IMR-90 (cell line): ENCODE measurements at regions of chr17 and their contacts with region 1.

Region 1: DNA sequence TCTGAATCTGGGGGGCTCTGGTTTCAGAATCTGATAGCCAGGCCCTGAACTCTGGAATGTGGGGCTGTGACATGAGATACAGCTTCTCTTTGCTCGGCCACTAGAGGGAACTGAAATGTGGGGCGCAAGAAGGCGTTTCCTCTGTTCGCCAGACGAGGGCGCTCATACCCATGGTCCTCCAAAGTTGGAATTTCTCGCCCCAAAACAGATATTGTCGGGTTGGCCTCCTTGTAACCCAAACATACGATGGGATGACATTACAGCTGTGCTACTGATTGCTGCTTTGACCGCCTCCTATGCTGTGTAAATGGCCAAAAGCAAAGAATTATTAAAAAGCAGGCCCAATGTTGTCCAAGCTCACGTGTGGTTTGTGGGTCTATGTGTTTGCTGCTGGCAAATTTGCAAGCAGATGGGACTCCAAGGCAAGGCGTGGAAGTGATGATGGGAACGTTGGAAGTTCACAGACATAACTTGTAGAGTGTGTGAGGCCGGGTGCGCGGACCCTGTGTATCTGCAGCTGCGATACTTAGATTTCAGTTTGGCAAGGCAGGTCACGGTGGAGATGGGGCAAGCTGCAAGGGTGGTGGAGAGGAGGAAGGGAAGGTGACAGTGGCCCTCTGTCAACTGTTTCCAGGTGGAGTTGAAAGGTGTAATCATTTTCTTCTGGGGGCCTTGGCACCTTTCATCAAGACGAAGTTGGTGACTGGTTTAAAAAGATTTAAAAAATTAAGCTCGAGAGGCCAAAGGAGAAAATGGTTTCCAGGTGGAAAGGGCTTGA is 13.0 kb upstream of the MSI2 start:
- DNase-seq: peak; percentile 60
- ATAC-seq: peak; percentile 96
- H3K4me3 ChIP-seq: no peak overlapping the region
- H3K27ac ChIP-seq: no peak overlapping the region
- H3K4me1 ChIP-seq: no peaks in the 10 kb centered on the region
- H3K27me3 ChIP-seq: peaks cover 12% of the 10 kb centered on the region
- CTCF ChIP-seq: peak; percentile 100
- POLR2A ChIP-seq: no peak
- RAD21 ChIP-seq: peak; percentile 96

Region 2: GRCh38 chr17:57255776-57256681 is 12.7 kb after region 1 on chr17 and contains the start of gene MSI2:
- CTCF ChIA-PET with region 1: interaction called, 15 read pairs
- POLR2A ChIA-PET with region 1: no interaction called
- dilution Hi-C with region 1: no loop called
- in situ Hi-C with region 1: no loop called
- intact Hi-C with region 1: no loop called
- DNase-seq: peak; percentile 78
- ATAC-seq: peak; percentile 84
- H3K4me3 ChIP-seq: peak within 1 kb of the TSS; percentile 99
- H3K27ac ChIP-seq: peak within 1 kb of the TSS; percentile 54
- H3K4me1 ChIP-seq: no peaks in the 10 kb centered on the region; the same call in 1 of the 2 replicates
- H3K27me3 ChIP-seq: peaks cover 5% of the 10 kb centered on the region
- CTCF ChIP-seq: no peak
- POLR2A ChIP-seq: no peak
- RAD21 ChIP-seq: no peak
- total RNA-seq, gene MSI2: 16.0 and 18.1 TPM in 2 replicates

Region 3: DNA sequence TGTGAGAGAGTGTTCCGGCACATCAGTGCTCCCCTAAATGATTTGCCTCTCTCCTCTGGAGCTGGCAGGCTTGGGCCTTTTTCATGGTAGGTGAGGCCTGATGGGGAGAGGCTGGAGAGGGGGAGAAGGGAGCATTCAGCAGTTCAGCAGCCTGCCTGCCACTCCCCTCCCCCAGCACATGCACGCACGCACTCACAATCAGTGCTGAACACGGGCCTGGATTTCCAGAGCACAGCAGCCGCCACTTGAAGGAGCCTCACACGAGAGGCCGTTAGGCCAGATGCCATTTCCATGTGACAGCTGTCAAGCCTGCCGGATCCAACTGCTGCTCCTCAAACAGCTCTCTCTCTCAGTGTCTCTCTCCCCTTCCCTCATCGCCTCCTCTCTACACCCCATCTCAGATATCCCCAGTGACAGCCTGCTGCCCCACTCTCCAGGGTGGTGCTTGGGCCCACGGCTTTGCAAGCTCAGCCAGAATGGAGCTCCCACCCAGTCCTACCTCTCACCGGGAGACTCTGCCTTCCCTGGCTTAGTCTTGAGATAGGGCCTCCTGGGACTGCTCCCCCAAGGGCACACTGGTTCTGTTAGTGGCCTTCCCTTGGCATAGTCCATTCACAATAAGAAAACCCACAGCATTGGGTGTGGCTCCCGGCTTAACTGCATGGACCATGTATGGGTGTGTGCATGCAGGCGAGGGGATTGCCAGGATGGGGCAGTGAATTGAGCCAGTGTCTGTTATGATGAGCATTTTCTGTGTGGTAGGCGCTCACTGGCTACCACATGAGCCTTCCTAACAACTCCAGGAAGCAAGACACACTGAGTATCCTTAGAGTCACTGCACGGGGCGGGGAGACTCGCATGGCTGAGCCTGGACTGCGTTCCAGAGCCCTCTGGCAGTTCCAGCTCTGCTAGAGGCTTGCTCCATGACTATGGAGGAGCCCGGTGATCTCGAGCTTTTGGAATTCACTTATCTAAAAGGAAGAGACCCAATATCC is 275.5 kb after region 1 on chr17:
- CTCF ChIA-PET with region 1: interaction called, 4 read pairs
- POLR2A ChIA-PET with region 1: no interaction called
- dilution Hi-C with region 1: no loop called
- in situ Hi-C with region 1: loop called (anchors 5 kb)
- intact Hi-C with region 1: no loop called
- DNase-seq: peak; percentile 58
- ATAC-seq: peak; percentile 28; the same call in 1 of the 2 replicates
- H3K4me3 ChIP-seq: no peak overlapping the region
- H3K27ac ChIP-seq: no peak overlapping the region
- H3K4me1 ChIP-seq: peaks cover 21% of the 10 kb centered on the region
- H3K27me3 ChIP-seq: no peaks in the 10 kb centered on the region
- CTCF ChIP-seq: no peak
- POLR2A ChIP-seq: no peak
- RAD21 ChIP-seq: no peak

Region 4: DNA sequence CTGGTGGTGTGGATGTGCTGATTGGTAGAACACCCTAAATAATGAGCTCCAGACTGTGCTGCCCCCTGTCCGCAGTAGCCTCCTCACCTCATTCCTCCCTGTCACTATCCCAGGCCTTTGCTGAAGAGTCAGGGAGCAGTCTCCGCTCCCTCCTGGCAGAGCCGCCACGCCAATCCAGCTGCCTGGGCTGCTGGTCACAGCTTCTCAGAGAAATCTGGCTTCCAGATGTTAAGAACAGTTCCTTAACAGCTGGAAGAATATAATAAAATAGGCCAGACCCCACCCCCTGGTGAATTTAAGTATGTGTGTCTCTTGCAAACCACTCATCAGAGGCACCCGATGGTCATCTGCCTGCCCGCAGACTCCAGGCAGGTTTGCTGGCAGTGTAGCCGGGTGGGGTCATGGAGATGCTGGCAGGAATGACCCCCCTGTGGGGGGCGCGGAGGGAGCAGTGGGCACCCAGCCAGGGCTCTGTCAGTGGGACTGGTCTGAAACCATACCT is 340.7 kb after region 1 on chr17:
- CTCF ChIA-PET with region 1: interaction called, 3 read pairs
- POLR2A ChIA-PET with region 1: no interaction called
- dilution Hi-C with region 1: no loop called
- in situ Hi-C with region 1: loop called (anchors 10 kb)
- intact Hi-C with region 1: loop called (anchors 5 kb)
- DNase-seq: no peak
- ATAC-seq: no peak
- H3K4me3 ChIP-seq: no peak overlapping the region
- H3K27ac ChIP-seq: no peak overlapping the region
- H3K4me1 ChIP-seq: no peaks in the 10 kb centered on the region
- H3K27me3 ChIP-seq: no peaks in the 10 kb centered on the region; the same call in 1 of the 2 replicates
- CTCF ChIP-seq: no peak
- POLR2A ChIP-seq: no peak
- RAD21 ChIP-seq: no peak

Region 5: GRCh38 chr17:57671667-57672632 is 428.6 kb after region 1 on chr17:
- CTCF ChIA-PET with region 1: interaction called, 17 read pairs
- POLR2A ChIA-PET with region 1: no interaction called
- dilution Hi-C with region 1: no loop called
- in situ Hi-C with region 1: no loop called
- intact Hi-C with region 1: loop called (anchors 1 kb)
- DNase-seq: peak; percentile 69
- ATAC-seq: peak; percentile 99
- H3K4me3 ChIP-seq: no peak overlapping the region
- H3K27ac ChIP-seq: no peak overlapping the region
- H3K4me1 ChIP-seq: peaks cover 12% of the 10 kb centered on the region
- H3K27me3 ChIP-seq: no peaks in the 10 kb centered on the region
- CTCF ChIP-seq: peak; percentile 89
- POLR2A ChIP-seq: 0 out of 2 replicates have a peak, but pooled peaks have one; percentile 25
- RAD21 ChIP-seq: peak; percentile 93

Region 6: GRCh38 chr17:57833179-57833939 is 590.0 kb after region 1 on chr17:
- CTCF ChIA-PET with region 1: interaction called, 6 read pairs
- POLR2A ChIA-PET with region 1: no interaction called
- dilution Hi-C with region 1: no loop called
- in situ Hi-C with region 1: no loop called
- intact Hi-C with region 1: loop called (anchors 1 kb)
- DNase-seq: peak; percentile 76
- ATAC-seq: peak; percentile 93
- H3K4me3 ChIP-seq: peak overlapping the region; percentile 58
- H3K27ac ChIP-seq: no peak overlapping the region; the same call in 1 of the 2 replicates
- H3K4me1 ChIP-seq: 0 out of 2 replicates have a peak, but pooled peaks cover 2% of the 10 kb centered on the region
- H3K27me3 ChIP-seq: no peaks in the 10 kb centered on the region
- CTCF ChIP-seq: peak; percentile 86
- POLR2A ChIP-seq: no peak
- RAD21 ChIP-seq: peak; percentile 79